Left cardiac atrium (tissue), 4 donors: ENCODE measurements at regions of chr18 and their contacts with region 1.

Region 1: GRCh38 chr18:23553887-23554286 is 32.4 kb downstream of the NPC1 start:
- DNase-seq: no peak
- ATAC-seq: no peak

Region 2: DNA sequence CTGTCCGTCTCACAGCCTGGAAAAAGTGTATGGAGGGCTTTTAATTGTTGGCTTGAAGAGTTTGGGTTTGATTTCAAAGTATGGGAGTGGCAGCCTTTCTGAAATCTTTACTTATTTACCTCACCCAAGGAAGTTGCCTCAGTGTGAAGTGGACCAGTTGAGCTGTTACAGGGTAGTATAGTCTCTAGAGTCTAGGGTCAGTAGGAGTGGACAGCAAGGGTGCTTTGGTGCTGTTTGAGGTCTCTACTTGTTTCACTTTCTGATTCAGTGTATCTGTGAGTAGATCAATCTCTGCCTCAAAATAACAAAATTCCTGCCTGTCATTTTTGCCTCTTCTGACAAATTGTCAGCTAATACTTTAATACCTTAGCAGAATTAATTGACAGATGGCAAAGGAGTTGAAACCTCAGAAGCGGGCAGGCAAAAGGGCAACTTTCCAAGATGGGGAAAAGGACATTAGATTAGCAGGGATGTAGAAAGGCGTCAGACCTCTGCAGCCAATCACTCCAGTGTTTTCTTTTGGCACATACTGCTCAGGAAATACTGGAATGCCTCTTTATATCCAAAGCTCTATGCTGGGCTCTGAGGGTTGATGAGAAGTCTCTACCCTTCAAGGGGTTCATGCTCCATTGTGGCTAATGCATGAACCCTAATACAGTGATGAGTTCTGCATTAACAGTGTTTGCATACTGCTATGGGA is 94.9 kb before region 1 on chr18:
- intact Hi-C with region 1: loop called in 1 of 2 experiments (anchors 10 kb)
- DNase-seq: no peak
- ATAC-seq: no peak